ENCODE measurements at regions of chr2 and their contacts with region 1.

Region 1: DNA sequence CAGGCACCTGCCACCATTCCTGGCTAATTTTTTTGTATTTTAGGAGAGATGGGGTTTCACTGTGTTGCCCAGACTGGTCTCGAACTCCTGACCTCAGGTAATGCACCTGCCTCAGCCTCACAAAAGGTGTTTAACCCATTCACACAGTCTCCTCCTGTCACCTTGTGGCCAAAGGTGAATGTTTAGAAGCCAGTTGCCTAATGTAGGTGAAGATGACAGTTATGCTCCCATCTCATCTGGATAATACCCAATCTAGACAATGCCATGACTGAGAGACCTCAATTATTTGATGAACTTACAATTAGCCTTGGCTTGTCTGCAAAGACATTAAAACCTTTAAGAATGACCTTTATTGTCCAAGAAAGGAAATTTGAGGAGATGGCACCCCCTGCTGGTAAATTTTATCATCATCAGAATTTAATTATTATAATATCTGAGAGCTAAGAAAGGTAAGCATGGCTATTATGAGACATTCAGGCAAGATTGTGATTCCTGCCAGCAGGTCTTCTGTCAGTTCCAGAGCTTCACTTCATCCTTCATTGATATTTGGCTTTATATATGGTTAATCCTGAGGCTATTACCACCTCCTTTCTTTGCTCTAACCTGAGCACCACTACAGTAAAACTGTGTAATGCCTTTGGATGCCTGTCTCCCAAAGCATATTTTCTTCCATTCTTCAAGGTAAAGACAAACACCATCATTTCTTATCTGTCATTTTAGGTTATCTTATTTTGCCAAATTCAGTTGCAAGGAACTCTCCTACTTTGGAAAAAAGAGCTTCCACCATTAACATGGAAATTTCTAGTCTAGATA is 117.6 kb downstream of the FAM124B start:
- DNase-seq: no peak
- H3K4me3 ChIP-seq: no peak overlapping the region
- H3K27ac ChIP-seq: no peak overlapping the region
- H3K4me1 ChIP-seq: no peaks in the 10 kb centered on the region
- H3K27me3 ChIP-seq: peaks cover 0 to 1% (median 0%) of the 10 kb centered on the region in 4 experiments; a peak in 1 of 7 replicates
- CTCF ChIP-seq: peak in 2 of 3 experiments; percentile 75 to 76; a peak in 3 of 4 replicates
- EP300 ChIP-seq: no peak
- POLR2A ChIP-seq: no peak
- RAD21 ChIP-seq: peak; percentile 74 to 79

Region 2: GRCh38 chr2:223957092-223957851 is 327.1 kb before region 1 on chr2 and contains the start of gene MRPL44:
- CTCF ChIA-PET with region 1: interaction called, 18 read pairs
- POLR2A ChIA-PET with region 1: no interaction called
- DNase-seq: peak; percentile 75 to 99
- H3K4me3 ChIP-seq: peak within 1 kb of the TSS; percentile 89 to 93 (median 91)
- H3K27ac ChIP-seq: peak within 1 kb of the TSS; percentile 90
- H3K4me1 ChIP-seq: peaks cover 3 to 13% (median 5%) of the 10 kb centered on the region in 4 experiments; a peak in 4 of 7 replicates
- H3K27me3 ChIP-seq: no peaks in the 10 kb centered on the region
- CTCF ChIP-seq: no peak
- EP300 ChIP-seq: peak; percentile 6 to 92
- POLR2A ChIP-seq: peak; percentile 90 to 92
- RAD21 ChIP-seq: 0 out of 4 replicates have a peak, but pooled peaks of 1 of the 2 experiments have one; percentile 24
- total RNA-seq, gene MRPL44: 50.4 and 53.2 TPM in 2 replicates

Region 3: GRCh38 chr2:224062481-224063297 is 221.7 kb before region 1 on chr2:
- CTCF ChIA-PET with region 1: interaction called, 45 read pairs
- POLR2A ChIA-PET with region 1: no interaction called
- DNase-seq: no peak
- H3K4me3 ChIP-seq: no peak overlapping the region
- H3K27ac ChIP-seq: no peak overlapping the region
- H3K4me1 ChIP-seq: no peaks in the 10 kb centered on the region
- H3K27me3 ChIP-seq: no peaks in the 10 kb centered on the region
- CTCF ChIP-seq: peak in 2 of 3 experiments; percentile 30 to 40; a peak in 2 of 4 replicates
- EP300 ChIP-seq: no peak
- POLR2A ChIP-seq: no peak
- RAD21 ChIP-seq: peak; percentile 62 to 64

Region 4: DNA sequence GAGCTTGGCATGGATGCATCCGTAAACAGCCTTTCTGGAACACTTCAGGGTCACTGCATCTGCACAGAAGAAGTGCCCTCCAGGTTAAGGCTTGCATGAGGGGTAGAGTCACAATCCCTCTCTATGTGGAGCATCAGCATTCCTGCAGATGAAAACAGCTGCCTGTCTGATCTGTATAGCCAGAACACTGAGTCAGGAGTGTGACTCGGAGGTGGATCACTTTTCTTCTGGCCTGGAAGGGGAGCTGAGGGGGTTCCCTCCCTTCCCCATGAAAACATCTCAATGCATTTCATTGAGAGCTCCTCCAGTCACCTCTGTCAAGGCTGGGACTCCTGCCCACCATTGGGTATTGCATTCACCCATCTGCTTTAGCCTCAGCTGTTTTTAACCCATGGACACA is 172.8 kb before region 1 on chr2:
- CTCF ChIA-PET with region 1: interaction called, 15 read pairs
- POLR2A ChIA-PET with region 1: no interaction called
- DNase-seq: no peak
- H3K4me3 ChIP-seq: no peak overlapping the region
- H3K27ac ChIP-seq: no peak overlapping the region
- H3K4me1 ChIP-seq: peaks cover 0 to 3% (median 2%) of the 10 kb centered on the region in 4 experiments; a peak in 4 of 7 replicates
- H3K27me3 ChIP-seq: peaks cover 0 to 1% (median 0%) of the 10 kb centered on the region in 4 experiments; a peak in 1 of 7 replicates
- CTCF ChIP-seq: no peak
- EP300 ChIP-seq: no peak
- POLR2A ChIP-seq: no peak
- RAD21 ChIP-seq: no peak

Region 5: DNA sequence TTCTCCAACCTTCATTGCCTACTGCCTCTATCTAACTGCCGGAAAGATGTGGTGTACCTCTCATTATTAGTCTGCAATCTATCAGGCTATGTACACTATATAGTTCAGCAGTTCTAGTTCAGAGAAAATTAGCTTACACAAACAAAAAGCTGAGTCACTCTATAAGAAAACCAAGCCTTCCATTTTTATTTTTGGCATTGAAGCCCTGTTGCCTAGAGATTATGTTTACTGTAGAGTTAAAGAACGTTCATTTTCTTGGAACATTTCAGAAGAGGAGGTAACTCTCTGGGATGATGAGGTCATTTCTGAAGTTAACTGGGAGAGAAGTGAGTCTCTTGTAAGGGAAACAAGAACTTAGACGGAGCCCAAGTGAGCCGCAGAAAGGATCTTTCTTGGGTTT is 15.9 kb before region 1 on chr2:
- CTCF ChIA-PET with region 1: interaction called, 26 read pairs
- POLR2A ChIA-PET with region 1: no interaction called
- DNase-seq: no peak
- H3K4me3 ChIP-seq: no peak overlapping the region
- H3K27ac ChIP-seq: no peak overlapping the region
- H3K4me1 ChIP-seq: peaks cover 0 to 4% (median 0%) of the 10 kb centered on the region in 4 experiments; a peak in 2 of 7 replicates
- H3K27me3 ChIP-seq: no peaks in the 10 kb centered on the region
- CTCF ChIP-seq: no peak
- EP300 ChIP-seq: no peak
- POLR2A ChIP-seq: no peak
- RAD21 ChIP-seq: no peak